ENCODE measurements at regions of chr16 and their contacts with region 1.

Region 1: GRCh38 chr16:28950648-28951409 is at the start of gene NFATC2IP:
- DNase-seq: peak; percentile 99 to 100
- H3K4me3 ChIP-seq: peak within 1 kb of the TSS; percentile 71 to 100
- H3K27ac ChIP-seq: peak within 1 kb of the TSS; percentile 84 to 89
- H3K4me1 ChIP-seq: peaks cover 3 to 9% of the 10 kb centered on the region in 2 donors
- H3K27me3 ChIP-seq: no peaks in the 10 kb centered on the region
- CTCF ChIP-seq: no peak
- total RNA-seq, gene NFATC2IP: 11.2 TPM

Region 2: DNA sequence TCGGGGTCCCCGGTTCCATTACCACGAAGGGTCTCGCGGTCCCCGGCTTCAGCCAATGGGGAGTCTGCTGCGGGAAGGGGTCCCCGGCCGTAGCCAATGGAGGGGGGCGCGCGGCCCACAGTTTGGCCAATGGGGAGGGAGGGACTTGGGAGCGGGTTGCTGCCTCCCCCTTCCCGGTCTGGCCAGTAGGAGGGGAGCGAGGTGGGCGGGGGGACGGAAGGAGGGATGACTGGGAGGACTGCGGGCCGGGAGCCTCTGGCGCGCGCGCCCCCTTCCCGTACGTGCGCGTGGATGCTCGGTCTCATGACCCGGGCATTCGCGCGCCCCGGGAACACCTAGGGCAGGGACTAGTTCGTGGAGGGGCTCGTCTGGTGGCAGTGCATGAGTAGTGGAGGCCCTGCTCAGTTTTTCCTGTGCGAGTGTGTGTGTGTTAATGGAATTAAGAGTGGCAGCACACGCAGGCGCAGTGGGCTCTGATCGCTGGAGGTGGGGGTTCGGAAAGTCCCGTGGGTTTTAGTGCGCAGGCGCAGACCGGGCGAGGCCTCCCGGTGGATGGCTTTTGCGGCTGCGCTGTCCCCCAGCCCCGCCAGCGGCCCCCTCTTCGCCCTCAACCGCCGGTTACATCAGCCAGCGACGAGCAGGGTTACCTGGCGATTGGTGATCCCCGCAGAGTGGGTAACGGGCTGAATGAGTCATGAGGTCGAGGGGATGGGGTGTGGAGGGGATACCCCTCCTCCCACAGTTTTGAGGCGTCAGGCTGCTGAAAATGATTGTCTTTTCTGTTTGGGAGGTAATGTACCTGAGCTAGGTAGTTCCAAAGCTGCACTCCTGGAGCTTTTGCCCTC is 126.7 kb before region 1 on chr16:
- intact Hi-C with region 1: loop called (anchors 1 kb)
- DNase-seq: peak; percentile 88 to 98
- H3K4me3 ChIP-seq: peak overlapping the region; percentile 98 to 100
- H3K27ac ChIP-seq: peak overlapping the region; percentile 99 to 100
- H3K4me1 ChIP-seq: peaks cover 0 to 20% of the 10 kb centered on the region in 2 donors
- H3K27me3 ChIP-seq: no peaks in the 10 kb centered on the region
- CTCF ChIP-seq: peak in 1 of 3 experiments; percentile 18

Region 3: DNA sequence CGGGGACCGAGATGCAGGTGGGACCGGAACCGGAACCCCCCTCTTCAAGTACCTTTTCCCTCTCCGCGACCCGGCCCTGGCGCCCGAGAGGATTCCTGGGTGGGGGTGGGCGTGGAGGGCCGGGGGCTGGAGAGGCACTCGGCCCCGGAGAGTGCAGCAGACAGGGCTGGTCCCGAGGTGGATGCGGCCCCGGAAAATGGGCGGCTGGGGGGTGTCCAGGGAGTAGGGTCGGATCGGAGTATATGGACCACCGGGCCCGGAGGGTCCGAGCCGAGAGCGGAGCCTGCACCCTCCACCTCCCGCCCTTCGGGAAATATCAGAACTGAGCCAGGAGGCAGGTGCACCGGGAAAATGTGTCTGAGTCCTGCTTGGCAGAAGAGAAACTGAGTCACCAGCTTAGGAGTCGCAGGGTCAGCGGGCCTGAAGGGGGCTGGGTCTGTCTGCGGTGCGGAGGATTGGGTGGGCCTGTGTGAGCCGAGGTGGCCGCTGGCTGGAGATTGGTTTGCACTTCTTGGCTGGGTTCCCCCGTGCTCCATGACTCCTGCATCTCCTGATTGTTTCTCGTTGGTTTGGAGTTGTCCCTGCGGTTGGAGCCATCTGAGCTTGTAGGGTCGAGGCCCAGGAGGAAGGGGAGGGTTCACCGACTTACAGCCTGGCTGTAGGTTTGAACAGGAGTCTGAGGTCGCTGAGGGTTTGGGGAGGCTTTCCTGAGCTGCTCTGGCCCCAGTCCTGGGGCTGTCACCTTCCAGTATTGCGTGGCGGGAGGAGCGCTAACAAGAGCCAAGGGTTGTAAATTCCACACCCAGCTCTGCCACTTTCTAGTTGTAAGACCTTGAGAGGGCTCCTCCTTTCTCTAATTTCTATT is 86.7 kb before region 1 on chr16:
- intact Hi-C with region 1: loop called (anchors 1 kb)
- DNase-seq: no peak
- H3K4me3 ChIP-seq: peak overlapping the region; percentile 81 to 98
- H3K27ac ChIP-seq: peak overlapping the region; percentile 89 to 93
- H3K4me1 ChIP-seq: peaks cover 0 to 15% of the 10 kb centered on the region in 2 donors
- H3K27me3 ChIP-seq: no peaks in the 10 kb centered on the region
- CTCF ChIP-seq: no peak

Region 4: DNA sequence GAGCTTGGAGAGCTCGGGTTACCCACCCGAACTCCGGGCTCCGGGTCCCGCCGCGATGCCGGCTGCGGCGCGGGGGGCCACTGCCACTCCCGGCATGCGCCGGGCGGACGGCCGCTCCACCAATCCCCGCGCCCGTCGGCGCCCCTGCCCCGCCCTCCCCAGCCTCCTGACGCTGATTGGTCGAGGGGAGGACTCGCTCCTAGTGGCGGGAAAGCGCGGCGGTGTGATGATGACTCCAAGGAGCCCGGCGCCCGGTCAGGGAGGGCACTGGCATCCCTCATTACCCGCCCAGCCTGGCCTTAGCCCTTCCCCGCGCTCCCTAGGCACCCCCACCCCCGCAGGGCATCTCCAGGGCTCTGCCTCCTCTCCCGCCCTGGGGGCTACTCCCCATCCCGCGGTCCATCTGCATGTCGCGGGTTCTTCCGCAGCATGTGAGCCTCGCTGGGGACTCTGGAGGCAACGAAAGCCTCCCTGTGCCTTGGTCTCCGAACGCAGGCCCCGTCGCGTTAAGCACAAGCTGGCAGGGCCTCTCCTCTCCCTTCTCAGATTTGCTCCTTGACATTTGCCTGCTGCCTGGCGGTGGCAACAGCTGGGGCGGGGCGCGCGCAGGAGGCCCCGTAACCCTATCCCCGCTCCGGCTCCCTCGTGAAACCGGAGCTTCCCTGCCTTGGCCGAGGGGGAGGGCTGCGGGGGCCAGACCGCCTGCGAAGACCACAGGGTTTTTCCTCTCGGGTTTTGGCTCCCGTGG is 70.8 kb before region 1 on chr16:
- intact Hi-C with region 1: loop called (anchors 1 kb)
- DNase-seq: peak; percentile 52 to 91
- H3K4me3 ChIP-seq: peak overlapping the region; percentile 51 to 79
- H3K27ac ChIP-seq: no peak overlapping the region
- H3K4me1 ChIP-seq: peaks cover 9 to 10% of the 10 kb centered on the region in 2 donors
- H3K27me3 ChIP-seq: no peaks in the 10 kb centered on the region
- CTCF ChIP-seq: no peak

Region 5: DNA sequence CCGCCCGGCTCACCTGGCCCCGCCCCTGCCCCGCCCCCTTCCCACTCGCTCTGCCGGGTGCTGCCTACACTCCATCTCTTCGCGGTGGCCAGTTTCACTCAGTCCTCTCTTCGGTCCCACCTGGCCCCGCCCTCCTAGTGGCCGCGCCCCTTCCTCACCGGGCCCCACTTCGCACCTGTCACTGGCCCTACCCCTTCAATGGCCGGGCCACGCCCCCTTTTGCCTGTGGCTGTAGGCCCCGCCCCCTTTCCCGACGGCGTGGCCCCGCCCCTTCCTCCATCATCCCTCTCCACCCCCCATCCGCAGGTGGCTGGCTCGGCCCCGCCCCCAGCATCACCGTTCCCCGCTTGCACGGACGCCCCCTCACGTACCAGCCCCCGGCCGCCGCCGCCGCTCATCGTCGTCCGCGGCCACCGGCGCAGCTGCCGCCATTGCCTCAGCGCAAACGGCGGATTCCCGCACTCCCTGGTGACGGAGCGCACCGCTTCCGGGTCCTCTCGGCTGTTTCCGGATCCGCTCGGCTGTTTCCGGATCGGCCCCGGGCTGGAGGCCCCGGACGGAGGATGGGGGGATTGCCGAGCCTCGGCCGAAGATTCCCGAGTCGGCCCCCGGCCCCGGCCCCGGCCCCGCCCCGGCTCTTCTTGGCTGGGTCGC is 26.0 kb before region 1 on chr16 and contains the start of gene RABEP2:
- intact Hi-C with region 1: loop called (anchors 1 kb)
- DNase-seq: peak; percentile 45 to 94
- H3K4me3 ChIP-seq: peak within 1 kb of the TSS; percentile 80 to 90
- H3K27ac ChIP-seq: peak within 1 kb of the TSS; percentile 96 to 99
- H3K4me1 ChIP-seq: peaks cover 6 to 9% of the 10 kb centered on the region in 2 donors
- H3K27me3 ChIP-seq: no peaks in the 10 kb centered on the region
- CTCF ChIP-seq: no peak
- total RNA-seq, gene RABEP2: 64.5 TPM

Region 6: DNA sequence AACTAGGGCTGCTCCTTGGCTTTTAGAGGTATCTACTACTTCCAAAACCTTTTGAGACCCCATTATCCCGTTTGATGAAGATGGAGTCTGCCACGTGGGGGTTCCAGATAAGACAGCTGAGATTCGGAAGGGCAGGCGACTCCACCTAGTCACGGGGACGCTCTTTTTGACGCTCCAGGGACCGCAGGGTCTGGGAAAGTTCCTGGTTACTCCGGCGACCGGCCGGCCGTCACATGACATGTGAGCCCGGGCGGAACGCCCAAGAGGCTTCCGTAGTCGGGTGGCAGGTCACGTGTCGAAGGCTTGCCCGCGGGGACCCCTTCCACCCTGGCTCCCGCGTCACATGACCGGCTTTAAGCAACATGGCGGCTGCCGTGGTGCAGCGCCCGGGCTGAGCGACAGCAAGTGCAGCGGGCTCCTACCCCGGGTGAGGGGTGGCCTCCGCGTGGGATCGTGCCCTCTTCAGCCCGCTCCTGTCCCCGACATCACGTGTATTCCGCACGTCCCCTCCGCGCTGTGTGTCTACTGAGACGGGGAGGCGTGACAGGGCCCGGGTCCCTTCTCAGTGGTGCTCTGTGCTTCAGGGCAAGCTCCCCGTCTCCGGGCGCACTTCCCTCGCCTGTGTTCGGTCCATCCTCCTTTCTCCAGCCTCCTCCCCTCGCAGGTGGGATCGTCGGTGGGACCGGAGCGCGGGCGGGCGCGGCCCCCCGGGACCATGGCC is 23.8 kb after region 1 on chr16 and contains the start of gene SPNS1:
- intact Hi-C with region 1: loop called (anchors 1 kb)
- DNase-seq: peak; percentile 84 to 99
- H3K4me3 ChIP-seq: peak within 1 kb of the TSS; percentile 90 to 93
- H3K27ac ChIP-seq: peak within 1 kb of the TSS; percentile 77 to 80
- H3K4me1 ChIP-seq: peaks cover 5 to 20% of the 10 kb centered on the region in 2 donors
- H3K27me3 ChIP-seq: no peaks in the 10 kb centered on the region
- CTCF ChIP-seq: no peak
- total RNA-seq, gene SPNS1: 59.3 TPM

Region 7: GRCh38 chr16:28991687-28992086 is 40.9 kb after region 1 on chr16:
- intact Hi-C with region 1: no loop called
- DNase-seq: no peak
- H3K4me3 ChIP-seq: no peak overlapping the region
- H3K27ac ChIP-seq: no peak overlapping the region
- H3K4me1 ChIP-seq: no peaks in the 10 kb centered on the region
- H3K27me3 ChIP-seq: no peaks in the 10 kb centered on the region
- CTCF ChIP-seq: no peak

Region 8: GRCh38 chr16:29023279-29024277 is 72.7 kb after region 1 on chr16:
- intact Hi-C with region 1: no loop called
- DNase-seq: no peak
- H3K4me3 ChIP-seq: no peak overlapping the region
- H3K27ac ChIP-seq: no peak overlapping the region
- H3K4me1 ChIP-seq: no peaks in the 10 kb centered on the region
- H3K27me3 ChIP-seq: no peaks in the 10 kb centered on the region
- CTCF ChIP-seq: no peak

Measured in ascending aorta (tissue), 2 donors.